Activated CD4-positive, alpha-beta T cell treated with anti-CD3 and anti-CD28 coated beads for 36 hours (primary cell): ENCODE measurements at regions of chr11 and their contacts with region 1.

Region 1: DNA sequence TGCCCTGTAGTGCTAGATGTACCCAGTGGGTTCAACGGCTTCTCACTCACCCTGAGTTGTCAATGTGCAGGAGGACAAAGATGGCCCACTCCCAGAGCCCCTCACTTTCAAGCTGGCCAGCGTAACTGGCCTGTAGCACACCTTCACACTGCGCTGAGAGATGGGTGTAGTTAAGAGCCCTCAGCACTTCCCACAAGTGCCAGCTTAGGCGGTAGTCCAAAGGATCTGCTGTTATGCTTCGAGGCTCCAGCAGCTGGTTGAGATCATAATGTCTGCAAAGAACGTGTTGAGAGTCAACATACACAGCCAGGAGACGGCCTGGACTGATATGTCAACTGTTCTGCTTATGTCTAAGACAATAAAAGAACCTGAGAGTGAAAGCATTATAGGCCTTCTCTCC is 14.7 kb upstream of the CHRNA10 start:
- DNase-seq: no peak
- ATAC-seq: no peak
- H3K4me3 Mint-ChIP-seq: no peak overlapping the region
- H3K27ac Mint-ChIP-seq: no peak overlapping the region
- H3K4me1 Mint-ChIP-seq: peaks cover 5% of the 10 kb centered on the region
- H3K27me3 Mint-ChIP-seq: no peaks in the 10 kb centered on the region

Region 2: DNA sequence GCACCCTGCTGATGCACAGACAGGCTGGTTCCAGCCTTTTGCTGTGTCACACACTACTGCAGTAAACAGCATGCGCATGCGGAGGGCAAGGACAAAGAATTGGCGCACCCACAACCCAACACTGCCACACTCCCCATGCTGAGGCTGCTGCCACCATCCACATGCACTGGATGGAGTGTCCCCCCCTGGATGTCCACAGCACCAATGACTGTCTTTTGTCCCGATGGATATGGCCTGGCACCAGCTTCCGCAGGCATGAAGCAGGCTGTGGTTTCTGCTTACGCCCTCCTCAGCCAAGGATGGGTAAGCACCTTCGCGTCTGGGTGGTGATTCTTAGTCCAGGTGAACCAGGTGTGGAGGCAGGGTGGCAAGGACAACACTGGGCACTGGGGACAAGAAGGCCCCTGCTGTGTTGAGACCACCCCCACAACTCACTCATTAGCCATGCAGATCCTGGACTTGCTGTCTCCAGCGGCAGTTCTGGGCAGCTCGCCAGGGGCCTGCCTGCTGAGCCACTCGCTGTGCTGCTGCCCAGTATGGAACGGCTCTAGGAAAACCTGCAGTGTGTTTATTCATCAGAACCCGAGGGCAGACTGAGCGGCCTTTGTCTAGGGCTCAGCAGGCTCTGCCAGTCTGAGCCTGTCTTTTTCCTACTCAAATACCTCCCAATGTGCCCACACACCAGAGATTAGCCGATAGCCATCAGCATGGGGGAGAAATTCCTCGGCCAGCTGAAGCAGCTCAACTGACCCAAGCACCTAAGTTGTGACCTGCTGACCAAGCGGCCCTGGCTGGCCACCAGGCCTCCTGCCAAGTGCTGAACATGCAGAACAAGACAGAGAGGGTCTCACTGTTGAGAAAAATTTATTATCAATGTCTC is 685.6 kb before region 1 on chr11:
- CTCF ChIA-PET with region 1: no interaction called
- POLR2A ChIA-PET with region 1: no interaction called
- intact Hi-C with region 1: no loop called
- DNase-seq: no peak
- ATAC-seq: no peak
- H3K4me3 Mint-ChIP-seq: no peak overlapping the region
- H3K27ac Mint-ChIP-seq: no peak overlapping the region
- H3K4me1 Mint-ChIP-seq: no peaks in the 10 kb centered on the region
- H3K27me3 Mint-ChIP-seq: no peaks in the 10 kb centered on the region

Region 3: DNA sequence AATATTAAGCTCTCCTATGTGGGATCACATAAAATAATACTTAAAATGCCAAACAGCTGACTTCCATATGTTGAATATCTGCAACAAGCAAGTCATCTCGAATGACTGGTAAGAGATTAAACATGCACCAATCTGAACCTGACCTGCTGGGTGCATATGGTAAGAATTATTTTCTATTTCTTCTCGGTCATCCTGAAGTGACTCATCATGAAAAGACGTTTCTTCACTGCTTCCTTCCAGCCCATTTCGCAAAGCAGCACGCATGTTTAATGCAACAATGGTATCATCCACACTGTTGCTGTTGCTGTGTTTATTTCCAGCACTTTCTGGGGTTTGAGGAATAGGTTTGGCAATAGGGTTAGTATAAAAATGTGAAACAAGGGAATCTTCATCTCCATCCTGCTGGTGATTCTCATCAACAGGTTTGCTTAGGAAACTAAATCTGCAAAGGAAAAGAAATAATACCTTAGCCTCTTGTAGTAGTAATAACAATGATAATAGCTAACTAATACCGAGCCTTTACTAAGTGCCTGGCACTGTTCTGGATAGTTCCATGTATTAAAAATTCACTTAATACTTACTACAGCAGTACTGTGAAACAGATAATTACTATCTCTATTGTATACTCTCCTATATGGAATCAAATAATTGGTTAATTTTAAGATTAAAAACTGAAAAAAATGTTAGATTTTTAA is 37.2 kb after region 1 on chr11:
- CTCF ChIA-PET with region 1: no interaction called
- POLR2A ChIA-PET with region 1: no interaction called
- intact Hi-C with region 1: loop called in 1 of 2 experiments (anchors 5 kb)
- DNase-seq: no peak
- ATAC-seq: no peak
- H3K4me3 Mint-ChIP-seq: no peak overlapping the region
- H3K27ac Mint-ChIP-seq: no peak overlapping the region
- H3K4me1 Mint-ChIP-seq: no peaks in the 10 kb centered on the region
- H3K27me3 Mint-ChIP-seq: no peaks in the 10 kb centered on the region

Region 4: DNA sequence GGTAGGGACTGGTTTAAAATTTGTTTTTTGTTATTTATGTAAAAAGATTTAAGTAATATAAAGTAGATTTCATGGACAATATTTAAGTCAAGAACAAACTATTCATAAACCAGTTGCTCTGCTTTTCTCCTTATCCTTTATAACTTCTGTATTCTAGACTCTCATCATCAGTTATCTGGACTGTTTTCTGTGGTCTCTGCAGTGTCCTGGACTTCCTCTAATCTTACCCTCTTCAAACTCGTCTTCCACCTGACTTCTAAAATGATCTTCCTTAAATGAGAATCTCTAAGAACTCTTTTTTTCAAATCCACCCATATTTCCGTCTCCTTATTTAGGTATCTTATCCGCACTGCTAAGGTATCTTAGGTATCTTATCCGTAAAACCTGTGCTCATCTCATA is 416.8 kb after region 1 on chr11:
- CTCF ChIA-PET with region 1: interaction called, 3 read pairs
- POLR2A ChIA-PET with region 1: no interaction called
- intact Hi-C with region 1: loop called in 1 of 2 experiments (anchors 10 kb)
- DNase-seq: no peak
- ATAC-seq: no peak
- H3K4me3 Mint-ChIP-seq: no peak overlapping the region
- H3K27ac Mint-ChIP-seq: no peak overlapping the region
- H3K4me1 Mint-ChIP-seq: peaks cover 36% of the 10 kb centered on the region
- H3K27me3 Mint-ChIP-seq: no peaks in the 10 kb centered on the region